Dorsolateral prefrontal cortex (tissue), 120 donors: ENCODE measurements at regions of chr3 and their contacts with region 1.

Region 1: DNA sequence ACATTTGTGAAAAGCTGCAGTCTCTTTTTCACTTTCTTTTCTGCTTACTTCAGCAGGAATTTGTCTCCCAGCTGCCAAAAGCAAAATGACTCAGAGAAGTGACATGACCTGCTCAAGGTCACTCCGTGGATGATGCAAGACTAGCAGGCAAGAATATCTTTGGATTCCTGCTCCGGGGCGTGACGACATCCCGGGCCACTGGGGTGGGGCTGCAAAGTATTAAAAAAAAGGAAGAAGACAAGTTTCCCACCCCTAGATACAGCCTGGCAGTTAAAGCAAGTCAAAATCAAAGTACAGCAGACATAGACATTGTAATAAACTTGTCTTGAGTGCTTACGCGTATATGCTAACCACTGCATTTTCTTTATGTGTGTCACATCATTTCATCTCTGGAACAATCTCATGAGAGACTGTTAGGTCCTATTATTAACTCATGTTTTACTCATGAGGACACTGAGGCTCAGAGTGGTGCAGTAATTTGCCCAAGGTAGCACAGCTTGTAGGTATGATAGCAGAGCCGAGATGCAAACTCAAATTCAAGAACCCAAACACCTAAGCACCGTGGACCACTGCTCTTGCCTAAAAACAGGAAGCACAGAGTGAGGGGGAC is 485.2 kb upstream of the PROK2 start:
- DNase-seq: peak in 1 of 10 donors; percentile 31
- H3K4me3 ChIP-seq: no peak overlapping the region
- H3K27ac ChIP-seq: peak overlapping the region in 40 of 59 donors; percentile 0 to 99 (median 90)
- H3K27me3 ChIP-seq: no peaks in the 10 kb centered on the region
- CTCF ChIP-seq: no peak

Region 2: DNA sequence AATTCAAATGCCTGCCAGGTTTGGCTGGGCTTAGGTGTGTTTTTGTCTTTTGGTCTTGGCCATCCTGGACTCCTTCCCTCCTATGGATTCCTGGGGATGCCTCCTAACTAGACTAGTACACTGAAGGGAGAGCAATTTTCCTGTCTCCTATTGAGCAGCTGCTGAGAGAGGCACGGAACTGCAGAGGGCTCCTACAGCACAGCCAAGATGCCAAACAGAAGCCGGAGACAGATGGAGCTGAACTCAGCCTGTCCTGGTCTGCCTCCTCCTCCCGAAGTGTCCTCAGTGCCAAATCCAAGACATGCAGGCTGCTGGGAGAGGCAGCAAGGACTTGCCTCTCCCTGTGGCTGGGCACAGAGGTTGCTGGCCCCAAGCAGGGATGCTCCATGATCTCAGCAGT is 228.7 kb before region 1 on chr3:
- intact Hi-C with region 1: loop called in 1 of 2 experiments (anchors 10 kb)
- DNase-seq: peak; percentile 33 to 89 (median 78)
- H3K4me3 ChIP-seq: no peak overlapping the region
- H3K27ac ChIP-seq: peak overlapping the region in 8 of 59 donors; percentile 3 to 40 (median 12)
- H3K27me3 ChIP-seq: no peaks in the 10 kb centered on the region
- CTCF ChIP-seq: peak in 37 of 56 donors; percentile 5 to 50 (median 30)

Region 3: GRCh38 chr3:72339116-72340030 is 69.2 kb after region 1 on chr3:
- intact Hi-C with region 1: loop called (anchors 5 kb)
- DNase-seq: peak in 4 of 10 donors; percentile 40 to 56 (median 48)
- H3K4me3 ChIP-seq: no peak overlapping the region
- H3K27ac ChIP-seq: peak overlapping the region in 17 of 59 donors; percentile 4 to 75 (median 41)
- H3K27me3 ChIP-seq: no peaks in the 10 kb centered on the region
- CTCF ChIP-seq: no peak

Region 4: DNA sequence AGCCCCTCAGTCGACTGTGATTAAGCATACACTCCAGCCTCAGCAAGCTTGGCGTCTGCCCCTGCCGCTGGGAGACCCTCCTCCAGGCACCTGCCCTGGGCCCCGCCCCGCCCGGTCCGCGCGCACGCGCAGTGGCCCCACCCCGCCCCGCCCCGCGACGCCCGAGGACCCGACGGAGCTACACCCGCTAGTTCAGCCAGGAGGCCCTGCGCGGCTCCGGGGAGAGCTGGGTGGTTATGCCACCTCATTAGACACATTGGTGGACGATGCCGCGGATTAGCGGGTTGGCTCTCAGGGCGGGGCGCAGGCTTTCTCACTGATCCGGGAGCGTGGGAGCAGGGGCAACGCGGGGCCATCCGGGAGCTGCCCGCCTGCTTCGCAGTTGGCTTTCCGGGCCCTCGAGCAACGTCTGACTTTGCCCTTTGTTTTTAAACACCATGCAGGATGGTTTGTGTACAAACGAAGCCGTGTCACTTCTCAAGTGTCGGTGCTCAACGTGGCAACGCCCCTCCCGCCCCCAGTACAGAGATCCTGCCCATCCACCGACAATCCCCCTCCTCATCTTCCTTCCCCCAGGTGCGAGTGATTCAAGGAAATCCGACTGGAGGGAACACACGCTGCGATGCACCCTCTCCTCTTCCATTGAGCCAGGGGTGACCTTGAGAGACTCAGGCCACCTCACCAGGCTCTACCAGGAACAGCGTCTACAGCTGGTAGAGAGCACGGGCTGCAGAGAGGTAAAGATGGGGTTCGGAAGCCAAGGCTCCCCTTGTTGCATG is 468.8 kb after region 1 on chr3:
- intact Hi-C with region 1: no loop called
- DNase-seq: peak in 7 of 10 donors; percentile 25 to 67 (median 42)
- H3K4me3 ChIP-seq: peak overlapping the region; percentile 25 to 73 (median 57)
- H3K27ac ChIP-seq: peak overlapping the region in 31 of 59 donors; percentile 2 to 79 (median 33)
- H3K27me3 ChIP-seq: peaks cover 0 to 9% (median 0%) of the 10 kb centered on the region in 45 donors
- CTCF ChIP-seq: peak in 5 of 56 donors; percentile 7 to 20 (median 17)